Right lobe of liver (tissue), 6 donors: ENCODE measurements at regions of chr21 and their contacts with region 1.

Region 1: DNA sequence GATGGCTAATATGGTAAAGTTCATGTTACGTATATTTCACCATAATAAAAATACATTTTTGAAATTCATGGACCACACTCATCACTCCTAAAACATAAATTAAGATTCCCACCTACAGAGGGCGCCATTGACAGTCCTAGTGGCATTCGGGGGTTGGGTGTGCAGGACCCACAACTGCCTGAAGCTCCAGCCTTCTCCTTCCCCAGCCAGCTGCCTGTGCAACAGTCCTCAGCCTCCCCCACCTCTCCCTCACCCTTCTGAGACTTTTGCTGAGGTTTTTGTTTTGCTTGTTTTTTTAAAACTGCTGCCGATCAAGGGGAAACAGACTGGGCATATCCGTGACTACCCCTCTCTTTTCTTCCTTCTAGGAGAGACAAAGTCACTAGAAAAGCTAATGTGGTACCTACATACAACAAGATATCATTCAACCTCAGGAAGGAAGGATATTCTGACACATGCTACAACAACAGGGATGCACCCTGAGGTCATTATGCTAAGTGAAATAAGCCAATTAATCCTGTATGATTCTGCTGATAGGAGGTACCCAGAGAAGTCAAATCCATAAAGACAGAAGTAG is 9.2 kb upstream of the EVA1C start:
- DNase-seq: peak in 2 of 3 donors; percentile 37 to 63
- ATAC-seq: peak; percentile 85 to 94 (median 92)
- H3K4me3 ChIP-seq: no peak overlapping the region
- H3K27ac ChIP-seq: no peak overlapping the region
- H3K4me1 ChIP-seq: no peaks in the 10 kb centered on the region
- H3K27me3 ChIP-seq: no peaks in the 10 kb centered on the region
- CTCF ChIP-seq: peak; percentile 55 to 73 (median 60)
- POLR2A ChIP-seq: no peak

Region 2: DNA sequence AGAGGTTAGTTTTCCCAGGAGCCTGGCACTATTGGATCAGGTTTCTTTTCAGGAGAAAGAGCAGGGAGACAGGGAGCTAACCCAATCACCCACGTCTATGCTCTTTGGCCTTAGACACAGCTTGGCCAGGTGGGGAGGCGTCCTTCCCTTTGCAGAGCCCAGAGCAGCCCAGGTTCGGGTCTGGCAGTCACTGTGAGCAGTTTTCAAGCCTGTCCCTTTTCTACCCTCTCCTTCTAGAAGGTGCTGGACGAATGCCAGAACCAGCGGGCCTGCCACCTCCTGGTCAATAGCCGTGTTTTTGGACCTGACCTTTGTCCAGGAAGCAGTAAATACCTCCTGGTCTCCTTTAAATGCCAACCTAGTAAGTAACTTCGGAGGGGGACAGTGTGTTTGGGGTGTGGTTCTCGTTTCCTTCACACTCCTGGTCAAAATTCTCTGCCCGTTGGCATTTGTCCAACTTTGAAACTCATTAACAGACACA is 54.1 kb after region 1 on chr21:
- intact Hi-C with region 1: no loop called
- DNase-seq: peak; percentile 58 to 68 (median 65)
- ATAC-seq: peak; percentile 63 to 71 (median 67)
- H3K4me3 ChIP-seq: peak overlapping the region in 1 of 3 donors; percentile 7
- H3K27ac ChIP-seq: peak overlapping the region in 1 of 3 donors; percentile 53
- H3K4me1 ChIP-seq: peaks cover 0 to 30% (median 0%) of the 10 kb centered on the region in 4 donors
- H3K27me3 ChIP-seq: no peaks in the 10 kb centered on the region
- CTCF ChIP-seq: peak in 1 of 4 donors; percentile 17
- POLR2A ChIP-seq: no peak

Region 3: DNA sequence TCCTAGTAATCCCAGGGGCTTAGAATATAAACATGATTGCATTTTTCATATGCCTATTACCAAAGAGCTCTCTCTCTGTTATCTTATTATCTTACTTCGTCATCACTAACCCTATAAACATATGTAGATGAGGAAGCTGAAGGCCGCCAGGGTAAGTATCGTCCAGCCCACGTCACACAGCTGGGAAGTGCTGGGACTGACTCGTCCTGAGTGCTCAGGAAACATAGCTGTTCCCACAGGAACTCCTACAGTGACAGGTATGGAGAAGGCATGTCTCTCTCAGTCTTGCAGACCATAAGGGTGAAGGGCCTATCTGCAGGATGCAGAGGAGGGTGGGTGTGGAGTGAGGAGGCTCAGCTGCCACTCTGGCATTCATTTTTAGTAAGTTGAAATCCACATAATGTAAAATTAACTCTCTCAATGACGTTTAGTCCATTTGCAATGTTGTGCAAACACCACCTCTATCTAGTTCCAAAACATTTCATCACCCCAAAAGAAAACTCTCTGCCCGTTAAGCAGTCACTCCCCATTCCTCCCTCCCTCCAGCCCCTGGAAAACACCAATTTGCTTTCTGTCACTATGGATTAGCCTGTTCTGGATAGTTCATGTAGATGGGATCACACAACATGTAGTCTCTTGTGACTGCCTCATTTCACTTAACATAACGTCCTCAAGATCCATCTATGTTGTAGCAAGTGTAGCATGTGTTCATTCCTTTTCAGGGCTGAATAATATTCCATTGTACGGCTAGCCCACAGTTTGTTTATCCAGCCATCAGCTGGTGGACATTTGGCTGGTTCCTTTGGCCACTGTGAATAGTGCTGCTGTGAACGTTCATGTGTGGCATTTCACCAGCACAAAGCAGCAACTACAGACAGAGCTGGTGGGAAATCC is 113.7 kb after region 1 on chr21:
- intact Hi-C with region 1: no loop called
- DNase-seq: no peak
- ATAC-seq: peak in 3 of 4 donors; percentile 34 to 47 (median 43)
- H3K4me3 ChIP-seq: no peak overlapping the region
- H3K27ac ChIP-seq: no peak overlapping the region
- H3K4me1 ChIP-seq: peaks cover 0 to 8% (median 0%) of the 10 kb centered on the region in 4 donors
- H3K27me3 ChIP-seq: no peaks in the 10 kb centered on the region
- CTCF ChIP-seq: no peak
- POLR2A ChIP-seq: no peak

Region 4: DNA sequence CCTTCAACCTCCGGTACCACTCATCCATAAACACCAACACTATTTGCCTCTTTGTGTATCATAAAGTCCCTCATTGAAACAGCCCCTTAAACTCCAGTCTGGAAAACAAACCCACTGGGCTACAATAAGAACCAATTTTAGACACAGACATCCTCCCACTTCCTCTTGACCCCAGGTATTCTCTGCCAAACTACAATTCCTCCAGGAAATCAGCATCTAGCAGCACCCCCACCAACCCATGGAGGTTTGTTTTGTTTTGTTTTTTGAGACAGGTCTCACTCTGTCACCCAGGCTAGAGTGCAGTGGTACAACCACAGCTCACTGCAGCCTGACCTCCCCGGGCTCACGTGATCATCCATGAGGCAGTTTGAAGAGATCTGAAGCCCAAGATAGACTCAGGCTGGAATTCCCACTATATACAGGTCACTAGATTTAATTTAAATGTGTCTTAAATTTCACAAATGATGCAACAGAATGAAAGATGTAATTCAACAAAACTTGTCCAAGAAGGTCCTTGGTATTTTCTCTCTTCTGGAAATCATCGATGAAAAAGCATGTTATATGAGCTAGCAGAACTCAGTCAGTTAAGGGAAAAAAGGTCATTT is 151.6 kb after region 1 on chr21:
- intact Hi-C with region 1: no loop called
- DNase-seq: no peak
- ATAC-seq: no peak
- H3K4me3 ChIP-seq: no peak overlapping the region
- H3K27ac ChIP-seq: no peak overlapping the region
- H3K4me1 ChIP-seq: no peaks in the 10 kb centered on the region
- H3K27me3 ChIP-seq: no peaks in the 10 kb centered on the region
- CTCF ChIP-seq: no peak
- POLR2A ChIP-seq: no peak

Region 5: GRCh38 chr21:32597205-32597604 is 193.9 kb after region 1 on chr21:
- intact Hi-C with region 1: loop called (anchors 5 to 10 kb)
- DNase-seq: no peak
- ATAC-seq: no peak
- H3K4me3 ChIP-seq: no peak overlapping the region
- H3K27ac ChIP-seq: no peak overlapping the region
- H3K4me1 ChIP-seq: peaks cover 0 to 44% (median 9%) of the 10 kb centered on the region in 4 donors
- H3K27me3 ChIP-seq: no peaks in the 10 kb centered on the region
- CTCF ChIP-seq: no peak
- POLR2A ChIP-seq: no peak

Region 6: DNA sequence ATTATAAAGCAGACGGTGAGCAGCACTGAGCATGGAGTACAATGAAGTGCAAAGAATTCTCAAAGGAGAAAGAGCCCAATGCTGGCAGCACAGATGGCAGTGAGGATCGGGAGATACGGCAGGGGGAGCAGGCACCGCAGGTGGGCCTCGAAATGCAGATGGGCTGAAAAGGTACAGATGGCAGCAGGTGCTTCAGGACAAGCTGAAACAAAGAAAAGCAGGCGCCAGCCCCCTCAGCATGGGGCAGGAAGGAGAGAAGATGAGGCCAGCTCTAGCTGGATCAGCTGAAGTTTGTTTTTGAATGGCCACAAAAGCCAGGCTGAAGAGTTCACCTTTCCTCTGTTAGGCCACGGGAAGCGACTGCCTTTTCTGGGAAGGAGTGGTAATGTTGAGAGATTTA is 201.2 kb after region 1 on chr21:
- intact Hi-C with region 1: loop called (anchors 5 to 10 kb)
- DNase-seq: no peak
- ATAC-seq: no peak
- H3K4me3 ChIP-seq: no peak overlapping the region
- H3K27ac ChIP-seq: no peak overlapping the region
- H3K4me1 ChIP-seq: peaks cover 0 to under 1% (median 0%) of the 10 kb centered on the region in 4 donors
- H3K27me3 ChIP-seq: no peaks in the 10 kb centered on the region
- CTCF ChIP-seq: no peak
- POLR2A ChIP-seq: no peak